HEK293 (cell line): ENCODE measurements at regions of chr6 and their contacts with region 1.

Region 1: DNA sequence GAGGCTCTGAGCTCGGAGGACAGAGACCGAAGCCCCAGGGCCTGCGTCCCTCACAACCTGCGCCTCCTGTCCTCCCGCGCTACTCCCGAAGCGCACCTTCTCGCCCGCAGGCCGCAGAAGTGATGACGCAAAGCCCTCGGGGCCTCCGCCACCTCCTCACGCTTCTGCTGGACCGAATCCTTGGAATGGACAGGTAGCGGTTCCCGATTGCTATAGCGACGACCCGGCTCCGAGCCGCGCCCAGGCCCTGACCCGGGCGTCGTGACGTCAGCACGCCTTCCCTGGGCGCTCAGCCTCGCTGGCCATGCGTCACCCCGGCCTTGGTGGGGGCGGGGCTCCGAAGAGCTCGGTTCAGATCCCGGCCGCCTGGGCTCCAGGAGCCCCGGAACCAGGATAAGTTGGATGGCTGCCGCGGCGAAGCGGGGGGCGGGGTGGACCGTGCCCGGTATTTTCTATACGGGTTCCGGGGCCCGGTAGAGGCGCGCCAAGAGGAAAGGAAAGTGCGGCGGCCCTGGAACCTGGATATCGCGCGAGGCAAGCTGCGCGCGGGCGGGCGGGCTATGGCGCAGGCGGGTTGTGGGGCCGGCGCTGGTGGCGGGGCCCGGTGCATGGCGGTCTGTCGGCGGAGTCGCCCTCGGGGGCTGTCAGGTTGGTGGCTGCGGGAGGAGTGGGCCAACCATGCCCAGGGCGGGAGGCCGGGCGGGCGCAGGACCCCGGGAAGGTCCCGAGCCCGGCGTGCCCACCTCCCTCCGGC is at the start of gene ZNF76:
- H3K4me3 ChIP-seq: peak within 1 kb of the TSS; percentile 76
- H3K27ac ChIP-seq: peak within 1 kb of the TSS; percentile 85
- H3K4me1 ChIP-seq: peaks cover 3% of the 10 kb centered on the region; the same call in 1 of the 2 replicates
- CTCF ChIP-seq: no peak

Region 2: GRCh38 chr6:35247642-35248231 is 11.6 kb before region 1 on chr6:
- CTCF ChIA-PET with region 1: interaction called, 64 read pairs
- POLR2A ChIA-PET with region 1: interaction called, 11 read pairs
- H3K4me3 ChIP-seq: no peak overlapping the region
- H3K27ac ChIP-seq: no peak overlapping the region
- H3K4me1 ChIP-seq: no peaks in the 10 kb centered on the region
- CTCF ChIP-seq: no peak

Region 3: DNA sequence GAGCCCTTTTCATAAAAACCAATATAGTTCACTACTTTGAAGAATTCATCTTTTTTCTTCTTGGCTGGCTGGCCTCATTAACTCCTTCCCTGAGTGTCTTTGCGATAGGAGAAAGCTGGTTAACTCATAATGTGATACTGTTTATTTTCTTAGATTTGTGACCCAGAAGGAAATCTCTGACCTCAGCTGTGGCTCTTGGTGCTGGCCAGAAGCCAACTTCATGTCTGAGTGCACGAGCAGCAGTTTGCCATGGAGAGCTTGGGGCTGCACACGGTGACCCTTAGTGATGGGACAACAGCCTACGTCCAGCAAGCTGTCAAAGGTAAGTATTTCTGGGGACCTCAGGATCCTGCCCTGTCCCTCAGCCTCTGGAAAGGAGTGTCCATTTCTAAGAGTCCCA is 21.5 kb after region 1 on chr6:
- CTCF ChIA-PET with region 1: no interaction called
- POLR2A ChIA-PET with region 1: interaction called, 23 read pairs
- H3K4me3 ChIP-seq: no peak overlapping the region
- H3K27ac ChIP-seq: no peak overlapping the region
- H3K4me1 ChIP-seq: peaks cover 14% of the 10 kb centered on the region
- CTCF ChIP-seq: no peak